Activated CD4-positive, alpha-beta memory T cell treated with anti-CD3 and anti-CD28 coated beads for 36 hours (primary cell): ENCODE measurements at regions of chr6 and their contacts with region 1.

Region 1: DNA sequence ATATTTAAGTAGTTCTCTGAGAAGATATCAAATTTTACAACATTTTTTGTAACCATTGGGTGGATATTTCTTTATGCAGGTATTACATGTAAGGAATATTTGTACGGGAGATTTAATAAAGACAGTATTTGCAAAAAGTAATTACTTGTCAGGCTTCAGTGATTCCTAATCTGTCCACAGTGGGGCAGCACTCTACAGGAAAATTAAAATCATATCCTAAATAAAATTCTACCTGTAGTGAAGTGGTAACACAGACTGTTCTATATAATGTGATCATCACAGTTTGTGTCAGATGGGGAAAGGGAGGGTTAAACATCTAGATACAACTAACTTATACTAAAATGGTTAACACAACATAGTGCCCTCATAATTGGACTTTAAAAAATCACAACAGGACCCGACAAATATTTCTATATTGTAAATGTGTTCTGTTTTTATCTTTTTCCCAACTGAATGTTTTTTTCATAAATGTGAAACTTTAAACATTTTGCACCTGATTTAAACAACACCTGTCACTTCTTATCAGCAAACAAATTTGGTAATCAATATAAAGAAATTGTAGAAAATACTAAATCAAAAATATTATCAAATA is 145.6 kb upstream of the MANEA start:
- DNase-seq: peak; percentile 31
- H3K4me3 Mint-ChIP-seq: no peak overlapping the region
- H3K27ac Mint-ChIP-seq: no peak overlapping the region
- H3K4me1 Mint-ChIP-seq: no peaks in the 10 kb centered on the region
- H3K27me3 Mint-ChIP-seq: no peaks in the 10 kb centered on the region

Region 2: DNA sequence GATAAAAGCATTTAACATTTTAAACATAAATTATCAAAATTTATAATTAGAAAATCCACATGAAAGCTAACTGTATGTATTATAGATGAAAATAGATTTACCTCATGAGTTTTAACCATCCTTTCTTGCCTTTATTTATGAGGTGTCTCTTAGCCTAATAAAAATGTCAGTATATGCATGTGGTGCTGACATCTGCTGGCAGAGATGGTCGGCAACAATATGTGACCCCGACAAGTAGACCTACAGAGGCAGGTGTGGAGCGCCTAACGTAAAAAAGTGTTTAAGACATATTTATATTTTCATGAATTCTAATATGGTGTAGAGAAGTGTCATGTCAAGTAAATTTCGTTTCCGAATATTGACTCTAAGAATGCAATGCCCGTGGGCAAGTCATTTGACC is 435.0 kb after region 1 on chr6:
- CTCF ChIA-PET with region 1: no interaction called
- POLR2A ChIA-PET with region 1: no interaction called
- intact Hi-C with region 1: loop called (anchors 1 kb)
- DNase-seq: no peak
- H3K4me3 Mint-ChIP-seq: no peak overlapping the region
- H3K27ac Mint-ChIP-seq: no peak overlapping the region
- H3K4me1 Mint-ChIP-seq: no peaks in the 10 kb centered on the region
- H3K27me3 Mint-ChIP-seq: no peaks in the 10 kb centered on the region

Region 3: GRCh38 chr6:95923518-95923917 is 491.8 kb after region 1 on chr6:
- CTCF ChIA-PET with region 1: no interaction called
- POLR2A ChIA-PET with region 1: no interaction called
- intact Hi-C with region 1: loop called (anchors 2 kb)
- DNase-seq: peak; percentile 13
- H3K4me3 Mint-ChIP-seq: no peak overlapping the region
- H3K27ac Mint-ChIP-seq: no peak overlapping the region
- H3K4me1 Mint-ChIP-seq: no peaks in the 10 kb centered on the region
- H3K27me3 Mint-ChIP-seq: no peaks in the 10 kb centered on the region

Region 4: GRCh38 chr6:96468681-96469224 is 1037.0 kb after region 1 on chr6:
- CTCF ChIA-PET with region 1: no interaction called
- POLR2A ChIA-PET with region 1: no interaction called
- intact Hi-C with region 1: loop called (anchors 10 kb)
- DNase-seq: no peak
- H3K4me3 Mint-ChIP-seq: no peak overlapping the region
- H3K27ac Mint-ChIP-seq: no peak overlapping the region
- H3K4me1 Mint-ChIP-seq: peaks cover 20% of the 10 kb centered on the region
- H3K27me3 Mint-ChIP-seq: peaks cover 2% of the 10 kb centered on the region